Endothelial cell of umbilical vein (primary cell): ENCODE measurements at regions of chr14 and their contacts with region 1.

Region 1: GRCh38 chr14:21455911-21456667 is at the start of gene CHD8:
- DNase-seq: peak; percentile 100
- H3K4me3 ChIP-seq: peak within 1 kb of the TSS; percentile 84 to 95 (median 91)
- H3K27ac ChIP-seq: peak within 1 kb of the TSS; percentile 97
- H3K4me1 ChIP-seq: peaks cover 10% of the 10 kb centered on the region
- H3K27me3 ChIP-seq: no peaks in the 10 kb centered on the region
- CTCF ChIP-seq: peak; percentile 69 to 70
- POLR2A ChIP-seq: peak; percentile 64
- total RNA-seq, gene CHD8: 86.7 and 94.3 TPM in 2 replicates

Region 2: GRCh38 chr14:21269252-21270046 is 186.6 kb before region 1 on chr14 and contains the start of gene HNRNPC:
- CTCF ChIA-PET with region 1: no interaction called
- POLR2A ChIA-PET with region 1: no interaction called
- dilution Hi-C with region 1: no loop called
- intact Hi-C with region 1: loop called (anchors 1 kb)
- DNase-seq: peak; percentile 100
- H3K4me3 ChIP-seq: peak within 1 kb of the TSS; percentile 78 to 99 (median 96)
- H3K27ac ChIP-seq: peak within 1 kb of the TSS; percentile 97
- H3K4me1 ChIP-seq: peaks cover 28% of the 10 kb centered on the region
- H3K27me3 ChIP-seq: no peaks in the 10 kb centered on the region
- CTCF ChIP-seq: no peak
- POLR2A ChIP-seq: peak; percentile 89
- total RNA-seq, gene HNRNPC: 611 and 674 TPM in 2 replicates

Region 3: GRCh38 chr14:21437063-21437901 is 18.8 kb before region 1 on chr14:
- CTCF ChIA-PET with region 1: interaction called, 26 read pairs
- POLR2A ChIA-PET with region 1: interaction called, 23 read pairs
- dilution Hi-C with region 1: no loop called
- intact Hi-C with region 1: loop called (anchors 1 kb)
- DNase-seq: peak; percentile 98
- H3K4me3 ChIP-seq: peak overlapping the region; percentile 52 to 97 (median 92)
- H3K27ac ChIP-seq: peak overlapping the region; percentile 68
- H3K4me1 ChIP-seq: peaks cover 15% of the 10 kb centered on the region
- H3K27me3 ChIP-seq: no peaks in the 10 kb centered on the region
- CTCF ChIP-seq: no peak
- POLR2A ChIP-seq: peak; percentile 85

Region 4: DNA sequence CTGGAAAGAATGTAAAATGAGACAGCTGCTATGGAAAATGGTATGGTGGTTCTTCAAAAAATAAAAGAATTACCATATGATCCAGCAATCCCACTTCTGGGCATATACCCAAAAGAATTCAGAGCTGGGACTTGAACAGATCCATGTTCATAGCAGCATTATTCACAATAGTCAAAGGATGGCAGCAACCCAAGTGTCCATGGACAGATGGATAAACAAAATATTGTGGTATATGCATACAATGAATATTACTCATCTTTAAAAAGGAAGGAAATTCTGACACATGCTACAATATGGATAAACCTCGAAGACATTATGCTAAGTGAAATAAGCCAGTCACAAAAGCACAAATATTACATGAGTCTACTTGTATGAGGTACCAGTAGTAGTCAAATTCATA is 11.5 kb after region 1 on chr14:
- CTCF ChIA-PET with region 1: interaction called, 6 read pairs
- POLR2A ChIA-PET with region 1: interaction called, 7 read pairs
- dilution Hi-C with region 1: no loop called
- intact Hi-C with region 1: loop called (anchors 1 kb)
- DNase-seq: peak; percentile 99
- H3K4me3 ChIP-seq: no peak overlapping the region
- H3K27ac ChIP-seq: peak overlapping the region; percentile 79
- H3K4me1 ChIP-seq: peaks cover 17% of the 10 kb centered on the region
- H3K27me3 ChIP-seq: no peaks in the 10 kb centered on the region
- CTCF ChIP-seq: no peak
- POLR2A ChIP-seq: no peak

Region 5: GRCh38 chr14:21476925-21477681 is 21.0 kb after region 1 on chr14 and contains the starts of genes RAB2B and TOX4:
- CTCF ChIA-PET with region 1: interaction called, 23 read pairs
- POLR2A ChIA-PET with region 1: interaction called, 7 read pairs
- dilution Hi-C with region 1: no loop called
- intact Hi-C with region 1: loop called (anchors 1 kb)
- DNase-seq: peak; percentile 99
- H3K4me3 ChIP-seq: peak within 1 kb of the TSS; percentile 69 to 95 (median 93)
- H3K27ac ChIP-seq: peak within 1 kb of the TSS; percentile 97
- H3K4me1 ChIP-seq: peaks cover 20% of the 10 kb centered on the region
- H3K27me3 ChIP-seq: no peaks in the 10 kb centered on the region
- CTCF ChIP-seq: peak; percentile 91 to 99
- POLR2A ChIP-seq: peak; percentile 15
- total RNA-seq, gene RAB2B: 29.1 and 30.6 TPM in 2 replicates
- total RNA-seq, gene TOX4: 63.2 and 67.4 TPM in 2 replicates

Region 6: DNA sequence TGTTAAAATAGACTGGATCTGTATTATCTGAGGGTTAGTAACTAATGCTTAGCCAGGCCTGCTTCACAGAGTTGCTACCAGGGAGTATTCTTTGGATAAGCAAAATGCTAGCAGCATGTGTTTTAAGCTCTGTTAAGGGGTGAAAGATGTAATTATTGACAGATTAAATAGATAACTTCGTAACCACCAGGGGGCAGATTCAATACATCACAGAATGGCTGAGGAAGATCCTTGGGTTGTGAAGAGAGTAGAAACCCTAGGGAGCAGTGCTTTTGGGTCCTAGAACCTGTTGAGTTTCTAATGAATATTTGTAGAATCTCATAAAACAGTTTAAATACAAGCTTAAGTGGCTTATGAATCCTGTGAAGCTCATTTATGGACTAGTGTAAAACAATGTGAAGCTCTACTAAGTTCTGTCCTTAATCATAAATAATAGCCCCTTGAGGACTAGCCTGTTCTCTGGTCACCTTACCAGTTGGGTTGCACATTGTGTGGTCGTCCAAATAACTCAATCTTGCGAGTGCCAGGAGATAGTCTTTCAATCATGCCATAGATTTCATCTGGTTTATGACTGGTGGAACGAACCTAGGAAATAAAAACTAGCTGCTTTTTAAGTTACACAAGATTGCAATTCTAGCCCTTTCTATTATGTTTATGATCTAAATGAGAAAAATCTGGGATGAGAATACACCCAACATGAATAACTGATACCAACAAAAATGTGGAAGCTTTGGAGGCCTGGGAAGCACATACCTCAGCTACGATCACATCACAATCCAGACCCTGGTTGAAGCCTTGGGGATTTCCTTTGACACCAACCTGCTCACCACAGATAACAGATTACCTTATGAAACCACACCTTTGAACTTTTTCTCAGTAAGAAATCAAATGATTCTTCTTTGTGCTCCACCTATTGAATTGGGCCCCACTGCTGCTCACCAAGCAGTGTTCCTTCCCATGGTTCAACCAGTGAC is 42.8 kb after region 1 on chr14:
- CTCF ChIA-PET with region 1: interaction called, 14 read pairs
- POLR2A ChIA-PET with region 1: no interaction called
- dilution Hi-C with region 1: no loop called
- intact Hi-C with region 1: no loop called
- DNase-seq: peak; percentile 55
- H3K4me3 ChIP-seq: no peak overlapping the region
- H3K27ac ChIP-seq: no peak overlapping the region
- H3K4me1 ChIP-seq: no peaks in the 10 kb centered on the region
- H3K27me3 ChIP-seq: no peaks in the 10 kb centered on the region
- CTCF ChIP-seq: peak; percentile 34 to 42
- POLR2A ChIP-seq: peak; percentile 10

Region 7: GRCh38 chr14:21557084-21557901 is 101.2 kb after region 1 on chr14:
- CTCF ChIA-PET with region 1: no interaction called
- POLR2A ChIA-PET with region 1: no interaction called
- dilution Hi-C with region 1: no loop called
- intact Hi-C with region 1: loop called (anchors 1 kb)
- DNase-seq: peak; percentile 88
- H3K4me3 ChIP-seq: peak overlapping the region in 2 of 3 experiments; percentile 25 to 30
- H3K27ac ChIP-seq: no peak overlapping the region
- H3K4me1 ChIP-seq: peaks cover 5% of the 10 kb centered on the region
- H3K27me3 ChIP-seq: no peaks in the 10 kb centered on the region
- CTCF ChIP-seq: peak; percentile 35 to 58
- POLR2A ChIP-seq: no peak

Region 8: DNA sequence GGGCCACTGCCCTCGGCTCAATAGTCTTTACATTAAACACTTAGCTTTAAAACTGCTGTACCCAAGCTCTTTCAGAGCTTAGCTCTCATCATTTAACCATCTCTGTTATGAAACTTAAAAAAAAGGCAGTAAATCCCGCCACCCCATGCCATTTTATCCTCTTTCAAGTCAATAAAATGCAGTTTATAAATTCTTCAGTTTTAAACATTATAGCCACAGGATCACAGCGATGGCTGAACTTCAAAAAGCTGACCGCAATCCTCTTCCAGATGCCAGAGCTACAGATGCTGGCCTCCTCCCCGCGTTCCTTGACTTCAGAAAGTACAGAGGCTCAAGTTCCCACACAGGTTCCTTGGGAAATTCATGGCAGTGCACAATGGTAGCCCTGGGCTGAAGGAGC is 119.6 kb after region 1 on chr14:
- CTCF ChIA-PET with region 1: no interaction called
- POLR2A ChIA-PET with region 1: no interaction called
- dilution Hi-C with region 1: no loop called
- intact Hi-C with region 1: no loop called
- DNase-seq: no peak
- H3K4me3 ChIP-seq: no peak overlapping the region
- H3K27ac ChIP-seq: no peak overlapping the region
- H3K4me1 ChIP-seq: no peaks in the 10 kb centered on the region
- H3K27me3 ChIP-seq: peaks cover 0 to 2% of the 10 kb centered on the region in 2 experiments
- CTCF ChIP-seq: no peak
- POLR2A ChIP-seq: no peak